Ascending aorta (tissue), 2 donors: ENCODE measurements at regions of chr10 and their contacts with region 1.

Region 1: GRCh38 chr10:34666008-34666705 is 148.9 kb downstream of the PARD3 start:
- DNase-seq: peak in 1 of 2 donors; percentile 70
- H3K4me3 ChIP-seq: no peak overlapping the region
- H3K27ac ChIP-seq: no peak overlapping the region
- H3K4me1 ChIP-seq: no peaks in the 10 kb centered on the region
- H3K27me3 ChIP-seq: no peaks in the 10 kb centered on the region
- CTCF ChIP-seq: peak; percentile 47 to 73 (median 64)

Region 2: DNA sequence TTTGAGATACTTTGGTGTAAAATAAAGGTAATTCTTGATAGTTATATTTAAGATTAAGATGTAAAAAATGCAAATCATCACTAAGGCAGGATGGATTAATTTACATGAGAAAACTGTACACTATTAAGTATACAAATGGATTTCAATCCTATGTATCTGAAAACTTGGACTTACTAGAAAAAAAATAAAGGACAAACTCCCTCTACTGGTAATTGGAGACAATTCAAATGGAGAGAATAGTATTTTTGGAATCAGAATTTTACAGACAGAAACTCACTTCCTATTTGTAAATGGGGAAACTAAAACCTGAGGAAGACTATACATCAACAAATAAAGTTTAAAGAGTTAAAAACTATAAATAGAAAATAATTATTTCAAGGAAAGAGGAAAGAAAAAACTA is 361.4 kb after region 1 on chr10:
- intact Hi-C with region 1: loop called (anchors 1 kb)
- DNase-seq: no peak
- H3K4me3 ChIP-seq: no peak overlapping the region
- H3K27ac ChIP-seq: no peak overlapping the region
- H3K4me1 ChIP-seq: no peaks in the 10 kb centered on the region
- H3K27me3 ChIP-seq: no peaks in the 10 kb centered on the region
- CTCF ChIP-seq: peak in 2 of 3 experiments; percentile 28 to 40